B cell (primary cell): ENCODE measurements at regions of chr1 and their contacts with region 1.

Region 1: DNA sequence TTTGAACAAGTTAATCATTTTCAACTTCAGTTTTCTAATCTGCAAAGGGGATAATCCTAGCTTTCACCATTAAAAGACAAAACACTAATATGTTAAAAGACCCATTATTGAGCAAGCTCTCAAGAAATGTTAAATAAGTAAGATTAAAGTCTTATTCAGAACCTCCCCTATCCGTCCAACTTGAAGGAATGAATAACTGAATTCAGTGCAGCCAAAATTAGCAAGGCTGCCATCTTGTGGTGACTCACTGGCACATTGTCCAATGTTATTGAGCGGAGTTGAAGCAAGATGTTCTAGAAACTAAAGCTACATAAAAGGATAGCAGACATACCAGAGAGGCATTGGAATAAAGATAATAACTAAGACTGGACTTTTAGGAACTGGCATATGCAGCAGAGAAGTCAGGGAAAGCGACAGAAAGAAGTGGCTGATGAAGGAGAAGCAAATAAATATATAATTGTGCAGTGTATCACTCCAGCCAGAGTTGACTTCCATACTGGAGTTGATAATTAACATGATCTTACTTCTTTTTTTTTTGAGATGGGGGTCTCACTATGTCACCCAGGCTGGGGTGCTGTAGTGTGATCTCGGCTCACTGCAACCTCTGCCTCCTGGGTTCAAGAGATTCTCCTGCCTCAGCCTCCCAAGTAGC is 8.2 kb upstream of the CAP1 start:
- DNase-seq: peak; percentile 72
- ATAC-seq: peak; percentile 45
- H3K4me3 ChIP-seq: no peak overlapping the region
- H3K4me3 Mint-ChIP-seq: no peak overlapping the region
- H3K27ac ChIP-seq: no peak overlapping the region
- H3K27ac Mint-ChIP-seq: peak overlapping the region; percentile 48
- H3K4me1 ChIP-seq: peaks cover 47 to 58% of the 10 kb centered on the region in 2 donors
- H3K4me1 Mint-ChIP-seq: peaks cover 44% of the 10 kb centered on the region
- H3K27me3 ChIP-seq: no peaks in the 10 kb centered on the region
- H3K27me3 Mint-ChIP-seq: no peaks in the 10 kb centered on the region
- CTCF ChIP-seq: peak; percentile 85

Region 2: DNA sequence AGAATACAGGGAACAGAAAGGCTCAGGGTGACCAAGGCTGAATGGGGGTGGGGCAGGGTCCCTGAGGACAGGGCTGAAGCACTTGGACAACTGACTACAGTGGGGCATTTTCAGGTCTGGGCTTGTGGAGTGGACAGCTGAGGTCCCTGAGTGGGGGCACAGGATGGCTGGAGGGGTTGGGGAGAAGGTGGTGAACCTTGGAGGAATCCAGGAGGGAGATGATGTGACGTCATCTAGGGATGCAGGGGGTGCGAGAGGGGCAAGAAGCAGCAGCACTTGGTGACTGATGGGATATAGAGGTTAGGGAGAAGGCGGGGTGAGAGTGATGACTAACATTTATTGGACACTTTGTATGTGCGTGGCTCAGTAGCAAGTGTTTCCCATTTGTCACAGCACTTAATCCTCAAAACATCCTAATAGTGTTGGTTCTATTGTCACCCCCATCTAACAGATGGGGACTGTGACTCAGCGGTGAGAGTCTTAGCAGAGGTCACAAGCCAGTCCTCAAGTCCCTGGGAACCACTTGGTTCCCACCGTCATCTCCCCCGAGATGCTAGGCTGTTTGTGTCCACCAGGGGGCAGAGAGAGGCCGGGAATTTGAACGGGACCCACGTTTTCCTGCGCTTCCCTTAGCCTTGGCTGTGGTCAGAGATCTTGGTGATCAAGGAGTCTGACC is 215.8 kb before region 1 on chr1:
- CTCF ChIA-PET with region 1: interaction called, 15 read pairs
- POLR2A ChIA-PET with region 1: no interaction called
- intact Hi-C with region 1: loop called (anchors 1 kb)
- DNase-seq: peak; percentile 80
- ATAC-seq: peak; percentile 61
- H3K4me3 ChIP-seq: peak overlapping the region in 4 of 5 experiments; percentile 25 to 45 (median 28)
- H3K4me3 Mint-ChIP-seq: peak overlapping the region; percentile 78
- H3K27ac ChIP-seq: no peak overlapping the region
- H3K27ac Mint-ChIP-seq: peak overlapping the region; percentile 38
- H3K4me1 ChIP-seq: peaks cover 6 to 15% of the 10 kb centered on the region in 2 donors
- H3K4me1 Mint-ChIP-seq: peaks cover 10% of the 10 kb centered on the region
- H3K27me3 ChIP-seq: no peaks in the 10 kb centered on the region
- H3K27me3 Mint-ChIP-seq: no peaks in the 10 kb centered on the region
- CTCF ChIP-seq: peak; percentile 78

Region 3: GRCh38 chr1:39919545-39919944 is 112.8 kb before region 1 on chr1:
- CTCF ChIA-PET with region 1: interaction called, 161 read pairs
- POLR2A ChIA-PET with region 1: interaction called, 4 read pairs
- intact Hi-C with region 1: no loop called
- DNase-seq: peak; percentile 83
- ATAC-seq: peak; percentile 98
- H3K4me3 ChIP-seq: no peak overlapping the region
- H3K4me3 Mint-ChIP-seq: no peak overlapping the region
- H3K27ac ChIP-seq: no peak overlapping the region
- H3K27ac Mint-ChIP-seq: no peak overlapping the region
- H3K4me1 ChIP-seq: peaks cover 0 to 4% of the 10 kb centered on the region in 2 donors
- H3K4me1 Mint-ChIP-seq: no peaks in the 10 kb centered on the region
- H3K27me3 ChIP-seq: no peaks in the 10 kb centered on the region
- H3K27me3 Mint-ChIP-seq: peaks cover 8% of the 10 kb centered on the region
- CTCF ChIP-seq: peak; percentile 75

Region 4: GRCh38 chr1:39984961-39985360 is 47.4 kb before region 1 on chr1:
- CTCF ChIA-PET with region 1: no interaction called
- POLR2A ChIA-PET with region 1: no interaction called
- intact Hi-C with region 1: no loop called
- DNase-seq: no peak
- ATAC-seq: no peak
- H3K4me3 ChIP-seq: no peak overlapping the region
- H3K4me3 Mint-ChIP-seq: no peak overlapping the region
- H3K27ac ChIP-seq: no peak overlapping the region
- H3K27ac Mint-ChIP-seq: no peak overlapping the region
- H3K4me1 ChIP-seq: no peaks in the 10 kb centered on the region
- H3K4me1 Mint-ChIP-seq: peaks cover 2% of the 10 kb centered on the region
- H3K27me3 ChIP-seq: no peaks in the 10 kb centered on the region
- H3K27me3 Mint-ChIP-seq: no peaks in the 10 kb centered on the region
- CTCF ChIP-seq: no peak

Region 5: DNA sequence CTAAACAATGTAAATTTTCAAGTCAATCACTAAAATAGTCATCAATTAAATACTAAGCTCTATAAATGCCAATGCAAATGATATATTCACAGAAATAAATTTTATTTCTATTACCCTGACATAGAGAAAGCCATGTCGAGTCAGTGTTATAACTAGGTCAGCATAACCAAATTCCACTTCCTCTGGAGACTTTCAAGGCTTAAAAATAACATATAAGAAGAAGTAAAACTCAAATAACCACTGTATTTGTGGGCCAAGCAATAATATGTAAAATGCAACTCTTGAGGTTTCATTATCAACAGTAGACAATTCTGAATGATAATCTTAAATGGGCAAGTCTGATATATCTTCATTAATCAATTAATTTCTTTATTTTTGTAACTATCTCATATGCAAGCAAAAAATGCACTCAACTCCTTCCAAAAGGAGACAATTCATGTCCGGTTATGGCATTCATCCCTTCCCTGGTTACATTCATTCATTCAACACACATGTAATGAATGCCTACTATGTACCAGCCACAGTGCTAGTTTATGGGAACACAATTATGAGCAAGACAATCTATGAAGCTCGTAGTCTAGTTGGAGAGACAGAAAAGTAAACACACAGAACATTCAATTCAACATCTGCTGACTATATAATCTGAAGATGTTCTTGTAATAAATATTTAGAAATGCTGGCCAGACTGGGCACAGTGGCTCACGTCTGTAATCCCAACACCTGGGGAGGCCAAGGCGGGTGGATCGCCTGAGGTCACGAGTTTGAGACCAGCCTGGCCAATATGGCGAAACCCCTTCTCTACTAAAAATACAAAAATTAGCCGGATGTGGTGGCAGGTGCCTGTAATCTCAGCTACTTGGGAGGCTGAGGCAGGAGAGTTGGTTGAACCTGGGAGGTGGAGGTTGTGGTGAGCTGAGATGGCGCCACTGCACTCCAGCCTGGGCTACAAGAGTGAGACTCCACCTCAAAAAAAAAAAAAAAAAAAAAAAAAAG is 28.9 kb before region 1 on chr1:
- CTCF ChIA-PET with region 1: interaction called, 30 read pairs
- POLR2A ChIA-PET with region 1: interaction called, 3 read pairs
- intact Hi-C with region 1: no loop called
- DNase-seq: peak; percentile 53
- ATAC-seq: peak; percentile 82
- H3K4me3 ChIP-seq: peak overlapping the region in 1 of 5 experiments; percentile 40
- H3K4me3 Mint-ChIP-seq: peak overlapping the region; percentile 77
- H3K27ac ChIP-seq: peak overlapping the region in 1 of 2 donors; percentile 37
- H3K27ac Mint-ChIP-seq: peak overlapping the region; percentile 77
- H3K4me1 ChIP-seq: peaks cover 54 to 55% of the 10 kb centered on the region in 2 donors
- H3K4me1 Mint-ChIP-seq: peaks cover 60% of the 10 kb centered on the region
- H3K27me3 ChIP-seq: no peaks in the 10 kb centered on the region
- H3K27me3 Mint-ChIP-seq: no peaks in the 10 kb centered on the region
- CTCF ChIP-seq: no peak

Region 6: GRCh38 chr1:40059338-40059959 is 27.1 kb after region 1 on chr1:
- CTCF ChIA-PET with region 1: interaction called, 10 read pairs
- POLR2A ChIA-PET with region 1: no interaction called
- intact Hi-C with region 1: no loop called
- DNase-seq: peak; percentile 59
- ATAC-seq: peak; percentile 54
- H3K4me3 ChIP-seq: peak overlapping the region in 4 of 5 experiments; percentile 16 to 45 (median 26)
- H3K4me3 Mint-ChIP-seq: peak overlapping the region; percentile 82
- H3K27ac ChIP-seq: peak overlapping the region; percentile 43 to 82
- H3K27ac Mint-ChIP-seq: peak overlapping the region; percentile 89
- H3K4me1 ChIP-seq: peaks cover 96 to 98% of the 10 kb centered on the region in 2 donors
- H3K4me1 Mint-ChIP-seq: peaks cover 90% of the 10 kb centered on the region
- H3K27me3 ChIP-seq: no peaks in the 10 kb centered on the region
- H3K27me3 Mint-ChIP-seq: no peaks in the 10 kb centered on the region
- CTCF ChIP-seq: no peak